ENCODE measurements at regions of chr15 and their contacts with region 1.

Region 1: GRCh38 chr15:65184868-65185738 is at the start of gene CLPX:
- DNase-seq: peak; percentile 93 to 98
- ATAC-seq: peak; percentile 86 to 90
- H3K4me3 ChIP-seq: peak within 1 kb of the TSS; percentile 72
- H3K27ac ChIP-seq: peak within 1 kb of the TSS; percentile 93 to 95
- H3K4me1 ChIP-seq: peaks cover 34% of the 10 kb centered on the region
- CTCF ChIP-seq: no peak
- EP300 ChIP-seq: no peak
- POLR2A ChIP-seq: peak; percentile 58
- RAD21 ChIP-seq: no peak; a peak in 1 of 5 replicates
- polyA plus RNA-seq, gene CLPX: 65.1 and 113 TPM in 2 replicates

Region 2: GRCh38 chr15:64981812-64982450 is 203.2 kb before region 1 on chr15:
- CTCF ChIA-PET with region 1: no interaction called
- POLR2A ChIA-PET with region 1: no interaction called
- DNase-seq: no peak
- ATAC-seq: no peak
- H3K4me3 ChIP-seq: no peak overlapping the region
- H3K27ac ChIP-seq: no peak overlapping the region
- H3K4me1 ChIP-seq: peaks cover 12% of the 10 kb centered on the region
- CTCF ChIP-seq: no peak
- EP300 ChIP-seq: no peak
- POLR2A ChIP-seq: no peak
- RAD21 ChIP-seq: no peak

Region 3: DNA sequence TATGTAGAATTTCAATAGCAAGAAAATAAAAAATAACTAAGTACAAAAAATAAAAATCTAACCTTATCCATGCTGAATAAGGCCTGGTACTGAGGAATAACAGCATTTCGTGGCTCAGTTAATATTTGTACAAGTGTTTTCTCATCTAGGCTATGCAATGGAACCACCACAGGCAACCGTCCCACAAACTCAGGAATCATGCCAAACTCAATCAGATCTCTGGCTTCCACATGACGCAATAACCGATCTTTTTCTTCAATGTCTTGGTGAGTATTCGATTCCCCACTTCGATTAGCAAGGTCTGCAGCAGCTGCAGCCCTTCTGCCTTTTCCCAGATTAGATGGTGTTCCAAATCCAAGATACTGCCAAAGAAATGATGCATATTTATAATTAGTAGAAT is 30.4 kb before region 1 on chr15:
- CTCF ChIA-PET with region 1: no interaction called
- POLR2A ChIA-PET with region 1: no interaction called
- DNase-seq: no peak
- ATAC-seq: no peak
- H3K4me3 ChIP-seq: no peak overlapping the region
- H3K27ac ChIP-seq: no peak overlapping the region
- H3K4me1 ChIP-seq: no peaks in the 10 kb centered on the region
- CTCF ChIP-seq: no peak
- EP300 ChIP-seq: no peak
- POLR2A ChIP-seq: no peak
- RAD21 ChIP-seq: no peak

Region 4: GRCh38 chr15:65201905-65202304 is 16.8 kb after region 1 on chr15:
- CTCF ChIA-PET with region 1: interaction called, 20 read pairs
- POLR2A ChIA-PET with region 1: interaction called, 7 read pairs
- DNase-seq: no peak
- ATAC-seq: no peak
- H3K4me3 ChIP-seq: no peak overlapping the region
- H3K27ac ChIP-seq: no peak overlapping the region
- H3K4me1 ChIP-seq: no peaks in the 10 kb centered on the region
- CTCF ChIP-seq: no peak
- EP300 ChIP-seq: no peak
- POLR2A ChIP-seq: no peak
- RAD21 ChIP-seq: no peak

Region 5: DNA sequence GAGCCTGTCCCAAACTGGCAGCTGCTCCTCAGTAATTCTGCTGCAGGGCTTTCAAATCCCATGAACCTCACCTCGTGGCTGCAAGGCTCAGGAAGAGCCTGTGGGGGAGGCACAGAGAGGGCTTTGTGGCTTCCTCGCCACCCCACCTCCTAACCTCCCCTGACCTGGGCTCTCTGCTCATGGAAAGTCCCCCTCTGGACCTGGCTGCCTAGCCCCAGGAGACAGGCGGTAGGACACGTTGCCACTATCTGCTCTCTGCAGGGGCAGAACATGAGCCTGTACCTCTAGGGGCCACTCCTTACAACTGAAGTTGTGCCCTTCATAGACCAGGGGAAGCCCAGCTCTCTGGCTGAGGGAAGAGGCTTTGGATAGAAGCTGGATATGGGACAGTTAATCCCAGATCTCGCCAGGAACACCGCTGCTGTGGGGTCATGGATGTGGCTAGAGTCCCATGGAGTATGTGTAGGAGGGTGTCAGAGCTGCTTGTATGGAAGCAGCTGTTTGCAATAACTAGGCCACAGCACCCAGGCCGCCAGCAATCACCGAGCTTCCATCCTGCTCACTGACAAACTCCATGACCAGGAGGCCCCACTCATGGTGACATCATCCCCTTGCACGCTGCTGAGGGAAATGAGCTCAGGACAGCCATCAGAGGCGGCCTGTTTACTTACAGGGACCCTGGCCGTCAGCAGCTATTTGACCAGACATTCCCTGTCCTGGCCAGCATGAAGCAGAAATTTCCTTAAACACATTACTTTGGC is 60.2 kb after region 1 on chr15:
- CTCF ChIA-PET with region 1: interaction called, 10 read pairs
- POLR2A ChIA-PET with region 1: no interaction called
- DNase-seq: no peak
- ATAC-seq: no peak
- H3K4me3 ChIP-seq: no peak overlapping the region
- H3K27ac ChIP-seq: no peak overlapping the region
- H3K4me1 ChIP-seq: peaks cover 3% of the 10 kb centered on the region; the same call in 1 of the 3 replicates
- CTCF ChIP-seq: no peak
- EP300 ChIP-seq: no peak
- POLR2A ChIP-seq: no peak
- RAD21 ChIP-seq: no peak

Region 6: DNA sequence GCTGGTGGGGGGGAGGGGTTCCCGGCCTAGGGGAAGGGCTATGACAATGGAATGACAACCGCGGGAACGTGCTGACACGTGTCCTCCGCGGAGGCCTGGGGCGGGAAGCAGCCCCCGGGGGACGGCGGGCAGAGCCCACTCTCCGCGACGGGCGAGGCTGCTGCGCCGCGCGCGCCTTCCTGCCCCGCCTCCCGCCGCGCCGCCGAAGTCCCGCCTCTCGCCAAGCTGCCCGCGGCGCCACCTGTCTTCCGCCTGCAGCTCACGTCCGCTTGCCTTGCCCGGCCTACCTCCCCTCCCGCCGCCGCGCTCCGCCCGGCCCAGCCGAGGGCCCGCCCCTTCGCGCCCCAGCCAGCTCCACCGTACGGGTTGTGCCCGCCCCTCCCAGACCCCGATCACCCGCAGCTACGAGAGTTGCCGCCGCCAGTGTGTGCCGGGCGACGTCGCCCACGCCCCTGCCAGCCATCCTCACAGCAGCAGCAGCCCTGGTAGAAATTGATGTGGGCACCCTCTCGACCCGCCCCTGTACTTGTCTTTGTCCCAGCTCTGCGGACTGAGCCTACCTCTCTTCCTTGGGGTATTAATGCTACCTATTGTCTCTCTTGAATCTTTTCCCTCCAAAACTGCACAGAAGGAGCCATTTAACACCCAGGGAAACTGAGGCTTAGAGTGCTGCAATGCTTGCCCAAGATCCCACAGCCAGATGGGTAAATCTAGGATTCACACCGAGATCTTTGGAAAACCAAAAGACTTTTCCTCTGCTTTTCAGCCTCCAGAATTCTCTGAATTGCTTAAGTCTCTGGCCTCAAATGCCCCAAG is 101.8 kb after region 1 on chr15 and contains the start of gene PARP16:
- CTCF ChIA-PET with region 1: interaction called, 408 read pairs
- POLR2A ChIA-PET with region 1: interaction called, 52 read pairs
- DNase-seq: peak; percentile 83 to 94
- ATAC-seq: peak; percentile 94 to 95
- H3K4me3 ChIP-seq: peak within 1 kb of the TSS; percentile 65
- H3K27ac ChIP-seq: peak within 1 kb of the TSS; percentile 85 to 91
- H3K4me1 ChIP-seq: peaks cover 14% of the 10 kb centered on the region
- CTCF ChIP-seq: peak; percentile 36
- EP300 ChIP-seq: no peak
- POLR2A ChIP-seq: peak; percentile 70
- RAD21 ChIP-seq: peak in 1 of 2 experiments; percentile 22; a peak in 1 of 5 replicates
- polyA plus RNA-seq, gene PARP16: 9.8 and 11.2 TPM in 2 replicates

Measured in A549 (cell line).